HCT116 (cell line): ENCODE measurements at regions of chr2 and their contacts with region 1.

Region 1: GRCh38 chr2:4164236-4164635 is 460.9 kb downstream of the DCDC2C start:
- DNase-seq: no peak
- ATAC-seq: no peak
- H3K4me3 ChIP-seq: no peak overlapping the region
- H3K27ac ChIP-seq: no peak overlapping the region
- H3K4me1 ChIP-seq: no peaks in the 10 kb centered on the region
- H3K27me3 ChIP-seq: no peaks in the 10 kb centered on the region
- CTCF ChIP-seq: no peak
- POLR2A ChIP-seq: no peak
- RAD21 ChIP-seq: no peak

Region 2: DNA sequence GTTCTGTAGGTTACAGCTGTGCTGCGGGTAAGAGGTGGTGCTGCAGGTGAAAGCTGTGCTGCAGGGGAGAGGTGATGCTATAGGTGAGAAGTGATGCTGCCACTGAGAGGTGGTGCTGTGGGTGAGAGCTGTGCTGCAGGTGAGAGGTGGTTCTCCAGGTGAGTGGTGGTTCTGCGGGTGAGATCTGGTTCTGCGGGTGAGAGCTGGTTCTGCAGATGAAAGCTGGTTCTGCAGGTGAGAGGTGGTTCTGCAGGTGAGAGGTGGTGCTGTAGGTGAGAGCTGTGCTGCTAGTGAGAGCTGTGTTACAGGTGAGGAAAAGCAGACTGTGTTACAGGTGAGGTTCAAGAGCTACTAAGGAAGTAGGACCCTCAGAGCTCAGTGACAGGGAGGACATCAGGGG is 244.6 kb before region 1 on chr2:
- CTCF ChIA-PET with region 1: no interaction called
- POLR2A ChIA-PET with region 1: no interaction called
- RAD21 ChIA-PET with region 1: no interaction called
- intact Hi-C with region 1: no loop called
- DNase-seq: no peak
- ATAC-seq: no peak
- H3K4me3 ChIP-seq: no peak overlapping the region
- H3K27ac ChIP-seq: no peak overlapping the region
- H3K4me1 ChIP-seq: no peaks in the 10 kb centered on the region
- H3K27me3 ChIP-seq: no peaks in the 10 kb centered on the region; the same call in 1 of the 2 replicates
- CTCF ChIP-seq: no peak
- POLR2A ChIP-seq: no peak
- RAD21 ChIP-seq: no peak

Region 3: DNA sequence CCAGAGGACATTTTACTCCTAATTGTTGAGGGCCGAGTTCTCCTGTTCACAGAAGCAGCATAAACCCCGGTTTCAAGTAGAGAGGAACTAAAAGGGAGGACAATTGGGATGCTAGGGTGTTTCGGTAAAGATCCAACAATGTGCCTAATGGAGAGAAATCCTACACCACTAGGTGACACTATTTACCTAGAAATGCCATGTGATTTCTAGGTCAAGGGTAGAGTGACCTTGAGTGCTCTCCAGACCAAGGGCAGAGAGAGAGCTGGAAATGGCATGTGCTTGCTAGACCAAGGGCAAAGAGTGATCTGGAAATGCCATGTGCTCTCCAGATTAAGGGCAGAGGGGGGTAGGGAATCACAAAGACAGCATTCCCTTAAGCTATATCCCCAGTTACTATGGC is 11.1 kb after region 1 on chr2:
- CTCF ChIA-PET with region 1: no interaction called
- POLR2A ChIA-PET with region 1: no interaction called
- RAD21 ChIA-PET with region 1: no interaction called
- intact Hi-C with region 1: loop called (anchors 1 kb)
- DNase-seq: no peak
- ATAC-seq: no peak
- H3K4me3 ChIP-seq: no peak overlapping the region
- H3K27ac ChIP-seq: no peak overlapping the region
- H3K4me1 ChIP-seq: no peaks in the 10 kb centered on the region
- H3K27me3 ChIP-seq: no peaks in the 10 kb centered on the region
- CTCF ChIP-seq: no peak
- POLR2A ChIP-seq: no peak
- RAD21 ChIP-seq: no peak